IMR-90 (cell line): ENCODE measurements at regions of chr11 and their contacts with region 1.

Region 1: GRCh38 chr11:77619576-77620198 is 17.9 kb downstream of the CLNS1A start:
- DNase-seq: peak; percentile 54
- ATAC-seq: no peak; the same call in 1 of the 2 replicates
- H3K4me3 ChIP-seq: no peak overlapping the region
- H3K27ac ChIP-seq: no peak overlapping the region
- H3K4me1 ChIP-seq: peaks cover 5% of the 10 kb centered on the region
- H3K27me3 ChIP-seq: no peaks in the 10 kb centered on the region
- CTCF ChIP-seq: peak; percentile 75
- POLR2A ChIP-seq: no peak
- RAD21 ChIP-seq: peak; percentile 75

Region 2: DNA sequence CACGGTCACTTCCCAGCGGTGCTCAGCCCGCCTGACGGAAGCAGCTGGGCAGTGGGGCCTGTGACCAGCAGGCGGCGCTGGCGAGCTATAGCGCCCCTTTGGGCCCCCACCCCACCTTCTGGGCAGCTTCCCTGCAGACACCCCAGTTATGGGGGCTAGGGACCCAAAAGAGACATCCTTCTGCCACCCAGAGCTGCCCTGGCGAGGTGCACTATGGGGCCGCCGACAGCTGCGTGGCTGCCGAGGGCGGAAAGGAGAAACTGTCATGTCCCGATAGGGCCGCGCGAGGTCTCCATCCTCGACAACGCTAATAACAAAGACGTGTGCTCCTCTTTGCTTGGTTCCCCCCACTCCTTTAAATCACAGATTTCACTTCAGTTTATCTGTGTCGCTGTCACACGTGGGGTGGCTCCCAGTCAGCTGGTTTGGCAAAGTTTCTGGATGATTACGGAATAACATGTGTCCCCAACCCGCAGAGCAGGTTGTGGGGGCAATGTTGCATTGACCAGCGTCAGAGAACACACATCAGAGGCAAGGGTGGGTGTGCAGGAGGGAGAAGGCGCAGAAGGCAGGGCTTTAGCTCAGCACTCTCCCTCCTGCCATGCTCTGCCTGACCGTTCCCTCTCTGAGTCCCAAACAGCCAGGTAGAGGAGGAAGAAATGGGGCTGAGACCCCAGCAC is 492.3 kb before region 1 on chr11:
- CTCF ChIA-PET with region 1: no interaction called
- POLR2A ChIA-PET with region 1: no interaction called
- dilution Hi-C with region 1: no loop called
- in situ Hi-C with region 1: no loop called
- intact Hi-C with region 1: loop called (anchors 1 kb)
- DNase-seq: peak; percentile 39
- ATAC-seq: peak; percentile 77
- H3K4me3 ChIP-seq: peak overlapping the region; percentile 33
- H3K27ac ChIP-seq: no peak overlapping the region
- H3K4me1 ChIP-seq: peaks cover 10% of the 10 kb centered on the region; the same call in 1 of the 2 replicates
- H3K27me3 ChIP-seq: no peaks in the 10 kb centered on the region
- CTCF ChIP-seq: peak; percentile 87
- POLR2A ChIP-seq: no peak
- RAD21 ChIP-seq: peak; percentile 71

Region 3: GRCh38 chr11:77198440-77198849 is 421.2 kb before region 1 on chr11:
- CTCF ChIA-PET with region 1: no interaction called
- POLR2A ChIA-PET with region 1: no interaction called
- dilution Hi-C with region 1: no loop called
- in situ Hi-C with region 1: no loop called
- intact Hi-C with region 1: loop called (anchors 1 kb)
- DNase-seq: peak; percentile 10
- ATAC-seq: no peak
- H3K4me3 ChIP-seq: no peak overlapping the region
- H3K27ac ChIP-seq: no peak overlapping the region
- H3K4me1 ChIP-seq: no peaks in the 10 kb centered on the region
- H3K27me3 ChIP-seq: no peaks in the 10 kb centered on the region; the same call in 1 of the 2 replicates
- CTCF ChIP-seq: peak; percentile 22; the same call in 1 of the 2 replicates
- POLR2A ChIP-seq: no peak
- RAD21 ChIP-seq: no peak

Region 4: GRCh38 chr11:77559686-77560425 is 59.8 kb before region 1 on chr11:
- CTCF ChIA-PET with region 1: no interaction called
- POLR2A ChIA-PET with region 1: no interaction called
- dilution Hi-C with region 1: no loop called
- in situ Hi-C with region 1: no loop called
- intact Hi-C with region 1: loop called (anchors 5 kb)
- DNase-seq: peak; percentile 93
- ATAC-seq: peak; percentile 86
- H3K4me3 ChIP-seq: no peak overlapping the region
- H3K27ac ChIP-seq: peak overlapping the region; percentile 25; the same call in 1 of the 2 replicates
- H3K4me1 ChIP-seq: peaks cover 13% of the 10 kb centered on the region
- H3K27me3 ChIP-seq: no peaks in the 10 kb centered on the region
- CTCF ChIP-seq: no peak
- POLR2A ChIP-seq: no peak
- RAD21 ChIP-seq: no peak